ENCODE measurements at regions of chr20 and their contacts with region 1.

Region 1: GRCh38 chr20:10225439-10226060 is 6.9 kb downstream of the SNAP25 start:
- DNase-seq: no peak
- H3K4me3 ChIP-seq: peak overlapping the region in 32 of 59 donors; percentile 0 to 85 (median 34)
- H3K27ac ChIP-seq: no peak overlapping the region
- H3K27me3 ChIP-seq: no peaks in the 10 kb centered on the region
- CTCF ChIP-seq: peak in 10 of 56 donors; percentile 9 to 31 (median 16)

Region 2: GRCh38 chr20:10079964-10080363 is 145.6 kb before region 1 on chr20:
- intact Hi-C with region 1: loop called in 1 of 2 experiments (anchors 10 kb)
- DNase-seq: no peak
- H3K4me3 ChIP-seq: no peak overlapping the region
- H3K27ac ChIP-seq: no peak overlapping the region
- H3K27me3 ChIP-seq: no peaks in the 10 kb centered on the region
- CTCF ChIP-seq: no peak